ENCODE measurements at regions of chr4 and their contacts with region 1.

Region 1: GRCh38 chr4:99683895-99684294 is 26.3 kb upstream of the C4orf54 start:
- DNase-seq: no peak
- H3K4me3 ChIP-seq: no peak overlapping the region
- CTCF ChIP-seq: no peak

Region 2: DNA sequence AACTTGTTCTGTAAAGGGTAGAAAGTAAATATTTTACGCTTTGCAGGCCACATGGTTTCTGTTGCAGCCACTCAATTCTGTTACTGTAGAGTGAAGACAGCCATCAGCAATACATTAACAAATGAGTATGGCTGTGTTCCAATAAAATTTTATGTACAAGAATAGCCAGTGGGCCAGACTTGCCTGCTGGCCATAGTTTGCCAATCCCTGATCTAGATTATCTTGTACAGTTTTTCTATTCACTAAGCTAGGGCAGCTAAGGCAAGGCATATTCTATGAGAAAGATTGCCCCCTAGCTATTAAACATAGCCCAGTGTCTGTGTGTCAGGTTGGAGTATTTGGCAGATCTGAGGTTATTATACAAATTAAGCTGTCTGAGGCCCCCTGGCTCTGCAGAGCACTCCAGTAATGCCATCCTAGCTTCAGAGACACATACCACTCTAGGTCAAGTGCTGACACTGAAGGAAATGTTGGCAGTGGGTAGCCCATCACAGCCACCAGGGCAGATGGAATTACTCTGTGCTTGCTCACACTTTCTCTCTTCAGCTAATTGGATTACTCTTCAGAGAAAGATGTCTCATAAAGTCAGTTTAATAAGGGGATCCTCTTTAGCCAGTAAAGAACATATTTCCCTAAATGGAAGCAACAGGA is 68.6 kb before region 1 on chr4:
- in situ Hi-C with region 1: no loop called
- DNase-seq: no peak
- H3K4me3 ChIP-seq: no peak overlapping the region
- CTCF ChIP-seq: no peak

Region 3: DNA sequence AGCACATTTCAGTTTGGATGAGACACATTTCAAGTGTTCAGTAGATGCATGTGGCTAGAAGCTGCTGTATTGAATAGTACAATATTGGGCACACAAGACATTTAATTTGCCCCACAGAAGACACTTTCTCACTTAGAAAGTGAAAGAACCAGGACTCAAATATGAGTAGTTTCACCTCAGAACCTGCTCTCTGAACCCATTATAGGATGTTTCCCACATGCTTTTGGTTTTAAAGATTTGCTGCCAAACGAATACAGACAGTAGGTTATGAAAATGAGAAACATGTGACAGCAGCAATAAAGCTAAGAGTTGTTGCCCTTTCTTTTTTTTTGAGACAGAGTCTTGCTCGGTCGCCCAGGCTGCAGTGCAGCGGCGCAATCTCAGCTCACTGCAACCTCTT is 58.5 kb before region 1 on chr4:
- in situ Hi-C with region 1: loop called (anchors 5 kb)
- DNase-seq: no peak
- H3K4me3 ChIP-seq: no peak overlapping the region
- CTCF ChIP-seq: no peak